Activated T-helper 1 cell treated with anti-CD3 and anti-CD28 coated beads, Interleukin-12 subunit alpha, Interleukin-12 subunit beta, Interleukin-2, Interleukin-4 antibody, amounts not matched to agents 30 ng/mL and 10 ng/mL and 1 ng/mL, durations not matched to agents 14 hours and 24 hours and 36 hours (primary cell): ENCODE measurements at regions of chr9 and their contacts with region 1.

Region 1: DNA sequence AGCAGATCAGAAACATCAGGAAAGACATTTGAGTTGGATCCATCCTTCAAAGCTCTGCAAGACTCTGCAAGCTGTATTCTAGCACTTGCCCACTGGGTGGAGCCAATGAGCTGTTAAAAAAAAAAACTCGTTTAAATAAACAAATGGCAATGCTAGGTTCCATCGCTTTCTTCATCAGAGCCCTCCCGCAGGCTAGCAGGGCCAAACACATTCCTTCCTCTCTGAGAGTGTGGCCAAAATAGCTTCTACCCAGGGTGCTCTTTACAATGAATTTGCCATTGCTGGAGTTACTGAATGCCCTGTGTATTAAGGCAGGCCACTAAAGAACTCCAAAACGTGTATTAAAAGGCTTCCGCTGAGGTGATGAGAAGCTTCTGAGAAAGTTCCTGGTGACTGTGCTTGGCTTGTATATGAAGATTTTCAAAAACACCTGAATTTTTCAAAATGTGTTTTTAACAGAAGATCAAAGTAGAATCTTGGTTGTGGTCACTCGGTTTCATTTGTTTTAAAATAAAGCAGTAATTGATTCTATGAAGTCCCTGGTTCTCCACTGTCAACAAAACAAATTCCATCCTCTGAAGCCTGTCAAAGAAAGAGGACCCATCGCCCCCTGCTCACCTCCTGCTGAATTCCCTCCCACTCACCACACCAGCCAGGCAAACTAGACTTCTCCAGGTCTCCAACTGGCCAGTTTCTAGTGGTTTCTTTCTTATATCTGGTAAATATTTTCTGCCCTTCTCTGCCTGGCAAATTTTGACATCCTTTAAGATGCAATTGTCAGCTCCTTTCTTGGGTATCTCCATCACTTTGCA is 36.5 kb upstream of the EQTN start:
- DNase-seq: peak; percentile 37
- H3K4me3 Mint-ChIP-seq: no peak overlapping the region
- H3K27ac Mint-ChIP-seq: no peak overlapping the region
- H3K4me1 Mint-ChIP-seq: peaks cover 10% of the 10 kb centered on the region
- H3K27me3 Mint-ChIP-seq: peaks cover 8% of the 10 kb centered on the region

Region 2: DNA sequence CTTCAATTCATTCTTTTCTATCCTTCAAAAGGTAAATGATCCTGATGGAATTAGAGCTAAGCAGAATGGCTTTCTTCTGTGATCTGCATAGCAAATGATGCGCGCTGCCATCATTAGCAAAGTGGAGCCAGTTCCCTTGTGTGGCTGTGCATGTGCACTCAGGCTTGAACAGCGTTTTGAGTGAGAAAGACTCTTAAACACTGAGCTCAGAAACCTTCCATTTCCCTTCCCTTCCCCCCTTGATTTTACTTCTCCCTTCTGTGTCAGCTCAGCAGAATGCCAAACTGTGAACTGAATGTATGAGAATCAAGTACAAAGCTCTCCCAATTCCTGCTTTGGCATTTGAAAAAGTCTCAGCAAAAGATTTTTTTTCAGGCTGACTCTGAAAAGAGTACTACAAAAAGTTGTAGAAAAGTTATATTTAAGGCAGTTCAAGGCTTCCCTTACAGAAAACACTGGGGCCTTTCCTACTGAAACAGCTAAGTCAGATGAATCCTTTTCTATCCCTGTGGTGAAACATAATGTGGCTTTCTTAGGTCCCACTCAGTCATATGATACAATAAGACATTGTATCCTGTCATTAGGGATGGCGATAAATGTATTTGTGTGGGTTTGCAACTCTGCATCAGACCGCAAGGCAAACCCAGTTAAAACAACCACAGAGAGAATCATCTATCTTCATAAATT is 663.6 kb before region 1 on chr9:
- intact Hi-C with region 1: no loop called
- DNase-seq: no peak
- H3K4me3 Mint-ChIP-seq: no peak overlapping the region
- H3K27ac Mint-ChIP-seq: no peak overlapping the region
- H3K4me1 Mint-ChIP-seq: no peaks in the 10 kb centered on the region
- H3K27me3 Mint-ChIP-seq: no peaks in the 10 kb centered on the region

Region 3: DNA sequence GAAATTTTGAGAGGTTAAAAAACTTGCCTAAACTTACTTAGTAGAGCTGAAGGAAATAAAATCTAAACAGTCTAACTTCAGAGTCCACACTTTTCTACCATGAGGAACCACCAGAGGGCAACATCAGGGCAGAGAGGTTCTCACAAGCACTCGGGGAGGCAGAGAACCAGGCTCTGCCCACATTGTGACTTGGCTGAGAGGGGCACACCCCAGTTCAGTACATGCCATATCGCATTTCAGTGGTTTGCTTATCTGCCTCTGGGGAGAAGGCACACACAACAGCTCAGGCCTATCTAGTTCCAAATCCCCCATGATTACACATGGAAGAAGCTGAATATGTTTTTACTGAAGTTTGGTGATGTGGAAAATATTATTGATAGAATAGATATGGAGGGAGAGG is 85.7 kb before region 1 on chr9:
- intact Hi-C with region 1: no loop called
- DNase-seq: no peak
- H3K4me3 Mint-ChIP-seq: no peak overlapping the region
- H3K27ac Mint-ChIP-seq: no peak overlapping the region
- H3K4me1 Mint-ChIP-seq: no peaks in the 10 kb centered on the region
- H3K27me3 Mint-ChIP-seq: peaks cover 2% of the 10 kb centered on the region

Region 4: GRCh38 chr9:27365707-27366376 is 32.4 kb after region 1 on chr9:
- intact Hi-C with region 1: loop called (anchors 1 kb)
- DNase-seq: peak; percentile 49
- H3K4me3 Mint-ChIP-seq: peak overlapping the region; percentile 9
- H3K27ac Mint-ChIP-seq: peak overlapping the region; percentile 56
- H3K4me1 Mint-ChIP-seq: peaks cover 32% of the 10 kb centered on the region
- H3K27me3 Mint-ChIP-seq: peaks cover 10% of the 10 kb centered on the region

Region 5: GRCh38 chr9:27377811-27378456 is 44.5 kb after region 1 on chr9:
- intact Hi-C with region 1: loop called (anchors 2 kb)
- DNase-seq: no peak
- H3K4me3 Mint-ChIP-seq: no peak overlapping the region
- H3K27ac Mint-ChIP-seq: no peak overlapping the region
- H3K4me1 Mint-ChIP-seq: peaks cover 31% of the 10 kb centered on the region
- H3K27me3 Mint-ChIP-seq: peaks cover 21% of the 10 kb centered on the region

Region 6: DNA sequence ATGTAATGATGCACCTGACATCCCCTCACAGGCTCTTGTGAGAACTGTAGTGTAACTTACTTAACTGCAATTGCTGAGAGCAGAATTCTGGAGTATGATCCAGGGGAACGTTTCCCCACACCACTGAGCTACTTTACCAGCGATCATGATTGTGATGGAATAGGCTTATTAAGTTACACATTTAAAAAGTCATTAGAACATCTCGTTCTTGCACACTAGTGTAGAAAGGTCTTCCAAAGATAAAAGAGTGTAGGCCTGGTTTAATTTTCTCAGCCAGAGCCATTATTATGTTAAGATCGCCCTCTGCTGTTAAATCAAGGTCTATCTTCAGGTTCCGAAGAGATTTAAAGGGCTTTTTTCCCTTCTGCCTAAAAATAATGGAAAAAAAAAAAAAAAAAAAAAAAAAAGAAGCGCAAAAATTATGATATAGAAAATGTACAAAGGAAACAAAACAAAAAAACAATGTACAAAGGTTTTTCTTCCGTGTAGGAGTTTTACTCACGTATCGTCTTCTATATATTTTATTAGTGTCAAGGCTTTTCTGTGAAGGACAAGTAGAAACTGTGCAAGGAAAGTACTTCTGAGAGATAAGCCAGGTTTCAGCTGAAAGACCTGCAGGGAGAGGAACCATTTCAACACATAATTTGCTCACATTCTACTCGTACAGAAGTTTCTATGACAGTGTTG is 214.8 kb after region 1 on chr9:
- intact Hi-C with region 1: loop called (anchors 1 kb)
- DNase-seq: no peak
- H3K4me3 Mint-ChIP-seq: no peak overlapping the region
- H3K27ac Mint-ChIP-seq: no peak overlapping the region
- H3K4me1 Mint-ChIP-seq: no peaks in the 10 kb centered on the region
- H3K27me3 Mint-ChIP-seq: no peaks in the 10 kb centered on the region

Region 7: GRCh38 chr9:27726244-27727081 is 393.0 kb after region 1 on chr9:
- intact Hi-C with region 1: loop called (anchors 2 kb)
- DNase-seq: peak; percentile 6
- H3K4me3 Mint-ChIP-seq: no peak overlapping the region
- H3K27ac Mint-ChIP-seq: no peak overlapping the region
- H3K4me1 Mint-ChIP-seq: no peaks in the 10 kb centered on the region
- H3K27me3 Mint-ChIP-seq: peaks cover 7% of the 10 kb centered on the region

Region 8: GRCh38 chr9:27749838-27750237 is 416.4 kb after region 1 on chr9:
- intact Hi-C with region 1: no loop called
- DNase-seq: no peak
- H3K4me3 Mint-ChIP-seq: no peak overlapping the region
- H3K27ac Mint-ChIP-seq: no peak overlapping the region
- H3K4me1 Mint-ChIP-seq: no peaks in the 10 kb centered on the region
- H3K27me3 Mint-ChIP-seq: peaks cover 5% of the 10 kb centered on the region

Region 9: GRCh38 chr9:28073270-28073669 is 739.8 kb after region 1 on chr9:
- intact Hi-C with region 1: loop called (anchors 5 kb)
- DNase-seq: no peak
- H3K4me3 Mint-ChIP-seq: no peak overlapping the region
- H3K27ac Mint-ChIP-seq: no peak overlapping the region
- H3K4me1 Mint-ChIP-seq: no peaks in the 10 kb centered on the region
- H3K27me3 Mint-ChIP-seq: no peaks in the 10 kb centered on the region